Common myeloid progenitor, CD34-positive (primary cell): ENCODE measurements at regions of chr7 and their contacts with region 1.

Region 1: DNA sequence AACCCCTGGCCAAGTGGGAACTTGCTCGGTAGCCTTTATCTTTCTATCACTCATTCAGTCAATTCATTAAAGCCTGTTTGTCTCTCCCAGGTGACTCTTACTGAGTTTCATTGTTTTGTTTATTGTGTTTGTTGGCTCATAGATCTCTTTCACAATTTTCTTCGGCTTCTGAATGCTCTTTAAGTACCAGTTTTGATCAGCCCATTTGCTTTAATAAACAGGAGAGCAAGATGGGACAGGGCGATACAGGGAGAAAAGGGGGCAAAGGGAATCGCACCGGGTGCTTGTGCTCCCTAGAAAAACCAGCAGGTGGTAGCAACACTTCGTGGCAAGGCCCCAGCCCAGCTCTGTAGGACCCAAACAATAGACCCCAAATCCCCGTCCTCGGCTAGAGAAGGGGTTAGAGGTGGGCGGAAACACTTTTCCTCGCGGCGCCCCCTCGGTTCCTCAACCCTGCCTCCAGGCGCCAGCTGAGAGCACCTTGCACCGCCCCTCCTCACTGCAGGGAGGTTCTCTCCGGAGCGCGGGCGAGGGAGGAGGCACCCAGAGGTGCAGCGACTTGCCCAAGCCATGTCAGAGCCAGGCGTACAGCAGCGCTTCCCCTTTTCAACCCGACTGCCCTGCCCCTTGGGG is 1.0 kb upstream of the EPHB6 start:
- DNase-seq: peak; percentile 84 to 94 (median 90)
- H3K4me3 ChIP-seq: peak overlapping the region; percentile 77 to 96 (median 84)
- H3K27ac ChIP-seq: no peak overlapping the region
- H3K4me1 ChIP-seq: peaks cover 5 to 31% (median 18%) of the 10 kb centered on the region in 4 experiments
- H3K27me3 ChIP-seq: no peaks in the 10 kb centered on the region

Region 2: DNA sequence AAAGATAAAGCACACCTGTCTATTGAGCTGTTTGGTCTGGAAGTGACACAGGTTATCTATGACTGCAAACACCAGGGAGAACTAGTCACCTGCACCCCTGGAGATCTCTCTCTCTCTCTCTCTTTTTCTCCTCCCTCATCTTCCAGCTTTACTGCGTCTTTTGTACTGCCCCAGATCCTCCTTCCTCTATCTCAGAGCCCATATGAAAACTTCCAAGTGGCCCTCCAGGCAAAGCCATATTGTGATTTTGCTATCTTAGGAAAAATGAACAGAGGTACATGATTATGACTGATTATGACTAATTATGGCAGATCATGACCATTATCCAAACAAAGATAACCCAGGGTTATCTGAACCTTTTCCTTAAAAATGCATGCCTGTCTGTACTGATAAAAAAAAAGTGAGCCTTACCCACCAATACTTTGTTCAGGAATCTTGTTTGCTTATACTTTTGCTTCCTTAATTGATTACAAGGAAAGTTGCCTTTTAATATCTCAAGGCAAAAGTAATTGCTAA is 11.5 kb before region 1 on chr7:
- CTCF ChIA-PET with region 1: interaction called, 18 read pairs
- POLR2A ChIA-PET with region 1: no interaction called
- DNase-seq: no peak
- H3K4me3 ChIP-seq: no peak overlapping the region
- H3K27ac ChIP-seq: no peak overlapping the region
- H3K4me1 ChIP-seq: no peaks in the 10 kb centered on the region
- H3K27me3 ChIP-seq: no peaks in the 10 kb centered on the region

Region 3: GRCh38 chr7:142866361-142867058 is 12.7 kb after region 1 on chr7:
- CTCF ChIA-PET with region 1: interaction called, 12 read pairs
- POLR2A ChIA-PET with region 1: no interaction called
- DNase-seq: no peak
- H3K4me3 ChIP-seq: no peak overlapping the region
- H3K27ac ChIP-seq: no peak overlapping the region
- H3K4me1 ChIP-seq: peaks cover 0 to 16% (median 15%) of the 10 kb centered on the region in 4 experiments
- H3K27me3 ChIP-seq: no peaks in the 10 kb centered on the region

Region 4: DNA sequence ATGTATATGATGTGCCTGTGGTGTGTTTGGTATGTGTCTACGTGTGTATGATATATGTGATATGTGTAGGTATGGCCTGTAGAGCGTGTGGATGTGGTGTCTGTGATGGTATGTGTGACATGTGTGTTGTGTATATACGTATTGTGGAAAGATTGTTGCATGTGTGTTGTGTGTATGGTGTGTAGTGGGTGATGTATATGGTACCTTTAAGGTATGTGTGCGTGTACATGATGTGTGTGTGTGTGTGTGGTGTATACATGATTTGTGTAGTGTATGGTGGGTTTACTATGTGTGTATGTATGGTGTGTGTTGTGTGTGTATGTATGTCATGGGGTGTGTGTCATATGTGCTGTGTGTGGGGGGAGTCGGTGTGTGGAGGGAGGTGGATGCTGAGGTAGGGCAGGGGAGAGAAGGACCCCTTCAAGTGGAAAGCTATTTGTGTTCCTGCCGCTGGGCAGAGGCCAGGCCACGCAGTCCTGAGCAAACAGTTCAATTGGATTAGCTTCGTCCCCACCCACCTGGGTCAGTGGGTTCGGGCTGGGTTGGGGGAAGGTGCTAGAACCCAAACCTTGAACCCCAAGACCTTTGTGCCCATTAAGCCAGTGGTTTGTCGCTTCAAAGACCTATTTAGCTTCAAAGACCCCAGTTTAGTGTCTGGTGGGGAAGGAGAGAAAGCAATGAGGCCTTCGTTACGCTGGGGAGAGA is 33.6 kb after region 1 on chr7:
- CTCF ChIA-PET with region 1: no interaction called
- POLR2A ChIA-PET with region 1: no interaction called
- DNase-seq: no peak
- H3K4me3 ChIP-seq: no peak overlapping the region
- H3K27ac ChIP-seq: no peak overlapping the region
- H3K4me1 ChIP-seq: no peaks in the 10 kb centered on the region
- H3K27me3 ChIP-seq: peaks cover 0 to 5% (median 0%) of the 10 kb centered on the region in 5 experiments

Region 5: DNA sequence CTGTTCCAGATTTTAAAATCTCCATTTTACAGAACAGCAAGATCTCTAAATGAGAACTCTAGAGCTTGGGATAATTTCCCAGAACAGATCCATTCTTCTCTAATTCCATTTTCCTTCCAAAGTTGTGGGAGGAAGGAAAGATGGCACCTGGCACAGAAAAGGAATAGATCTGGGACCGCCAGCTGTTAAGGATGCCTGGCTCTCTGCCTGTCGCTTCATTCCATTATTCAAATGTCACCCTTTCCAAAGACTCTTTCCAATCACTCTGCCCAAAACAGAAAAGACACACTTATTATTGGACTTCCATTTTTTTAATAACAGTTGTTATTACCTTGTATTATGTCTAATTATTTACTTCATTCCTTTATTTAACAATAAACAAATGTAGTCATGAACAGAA is 173.8 kb after region 1 on chr7:
- CTCF ChIA-PET with region 1: no interaction called
- POLR2A ChIA-PET with region 1: no interaction called
- DNase-seq: no peak
- H3K4me3 ChIP-seq: no peak overlapping the region
- H3K27ac ChIP-seq: no peak overlapping the region
- H3K4me1 ChIP-seq: peaks cover 0 to 16% (median 3%) of the 10 kb centered on the region in 4 experiments
- H3K27me3 ChIP-seq: peaks cover 0 to 2% (median 0%) of the 10 kb centered on the region in 5 experiments